HCT116 (cell line): ENCODE measurements at regions of chr5 and their contacts with region 1.

Region 1: GRCh38 chr5:147576646-147577535 is 67.0 kb upstream of the DPYSL3 start:
- DNase-seq: no peak
- ATAC-seq: peak; percentile 90
- H3K4me3 ChIP-seq: no peak overlapping the region
- H3K27ac ChIP-seq: no peak overlapping the region
- H3K4me1 ChIP-seq: no peaks in the 10 kb centered on the region
- H3K27me3 ChIP-seq: no peaks in the 10 kb centered on the region
- CTCF ChIP-seq: peak; percentile 69 to 91 (median 90)
- POLR2A ChIP-seq: no peak
- RAD21 ChIP-seq: peak; percentile 65

Region 2: GRCh38 chr5:146533260-146533857 is 1043.5 kb before region 1 on chr5:
- CTCF ChIA-PET with region 1: interaction called, 3 read pairs
- POLR2A ChIA-PET with region 1: no interaction called
- RAD21 ChIA-PET with region 1: no interaction called
- intact Hi-C with region 1: loop called (anchors 5 kb)
- DNase-seq: peak; percentile 73
- ATAC-seq: peak; percentile 97
- H3K4me3 ChIP-seq: no peak overlapping the region
- H3K27ac ChIP-seq: no peak overlapping the region
- H3K4me1 ChIP-seq: peaks cover 0 to 3% of the 10 kb centered on the region in 2 experiments; a peak in 2 of 4 replicates
- H3K27me3 ChIP-seq: no peaks in the 10 kb centered on the region
- CTCF ChIP-seq: peak; percentile 70 to 88 (median 77)
- POLR2A ChIP-seq: no peak
- RAD21 ChIP-seq: peak; percentile 91

Region 3: GRCh38 chr5:146947181-146947941 is 629.5 kb before region 1 on chr5:
- CTCF ChIA-PET with region 1: no interaction called
- POLR2A ChIA-PET with region 1: no interaction called
- RAD21 ChIA-PET with region 1: no interaction called
- intact Hi-C with region 1: no loop called
- DNase-seq: peak; percentile 16
- ATAC-seq: peak; percentile 77
- H3K4me3 ChIP-seq: no peak overlapping the region
- H3K27ac ChIP-seq: no peak overlapping the region
- H3K4me1 ChIP-seq: no peaks in the 10 kb centered on the region
- H3K27me3 ChIP-seq: no peaks in the 10 kb centered on the region
- CTCF ChIP-seq: peak; percentile 27 to 65 (median 45); a peak in 4 of 6 replicates
- POLR2A ChIP-seq: no peak
- RAD21 ChIP-seq: peak; percentile 50

Region 4: GRCh38 chr5:147188200-147189108 is 388.4 kb before region 1 on chr5:
- CTCF ChIA-PET with region 1: interaction called, 11 read pairs
- POLR2A ChIA-PET with region 1: no interaction called
- RAD21 ChIA-PET with region 1: no interaction called
- intact Hi-C with region 1: no loop called
- DNase-seq: peak; percentile 42
- ATAC-seq: peak; percentile 93
- H3K4me3 ChIP-seq: no peak overlapping the region
- H3K27ac ChIP-seq: no peak overlapping the region
- H3K4me1 ChIP-seq: no peaks in the 10 kb centered on the region
- H3K27me3 ChIP-seq: peaks cover 3% of the 10 kb centered on the region; the same call in 1 of the 2 replicates
- CTCF ChIP-seq: peak; percentile 65 to 88 (median 71)
- POLR2A ChIP-seq: no peak
- RAD21 ChIP-seq: peak; percentile 84

Region 5: DNA sequence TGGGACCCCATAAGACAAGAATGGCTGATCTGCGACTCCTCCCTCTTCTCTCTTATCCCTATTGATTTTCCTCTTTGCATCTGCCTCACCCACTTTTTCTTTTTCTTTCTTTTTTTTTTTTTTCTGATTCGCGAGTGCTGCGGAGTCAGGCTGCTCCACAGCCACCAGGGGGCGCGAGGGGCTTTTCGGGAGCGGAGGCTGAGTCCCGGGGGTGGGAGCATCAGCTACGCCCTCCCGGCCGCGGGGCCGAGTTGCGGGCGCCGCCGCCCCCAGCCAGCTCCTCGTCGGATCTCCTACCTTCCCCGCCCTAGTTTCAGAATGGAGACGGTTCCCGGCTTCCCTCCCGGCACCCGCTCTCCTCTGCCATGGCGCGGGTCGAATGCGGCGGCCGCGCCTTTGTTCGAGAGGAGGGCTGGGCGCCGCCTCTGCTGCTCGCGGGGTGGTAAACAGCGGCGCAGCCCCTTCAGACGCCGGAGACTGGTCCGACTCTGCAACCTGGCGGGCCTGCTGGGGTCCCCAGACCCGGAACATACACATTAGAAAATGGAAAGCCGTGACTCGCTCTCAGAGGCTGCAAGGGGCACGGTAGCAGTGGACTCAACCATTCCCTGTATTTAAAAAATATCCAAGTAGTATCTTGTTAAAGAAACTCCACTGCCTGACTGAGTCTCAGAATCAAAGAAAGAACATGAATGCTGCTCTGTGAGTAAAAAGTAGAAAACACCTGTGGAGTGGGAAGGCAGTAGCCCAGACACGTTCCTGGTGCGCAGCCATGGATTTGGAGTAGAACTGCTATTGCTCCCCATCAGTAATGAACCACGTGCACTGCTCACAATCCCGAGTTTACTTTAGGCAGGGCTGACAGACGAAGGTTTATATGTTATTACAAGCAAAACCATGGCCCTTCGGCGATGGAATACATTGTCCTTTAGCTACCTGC is 122.7 kb before region 1 on chr5:
- CTCF ChIA-PET with region 1: interaction called, 45 read pairs
- POLR2A ChIA-PET with region 1: interaction called, 7 read pairs
- RAD21 ChIA-PET with region 1: interaction called in 1 of 2 experiments, 4 read pairs
- intact Hi-C with region 1: loop called (anchors 1 kb)
- DNase-seq: peak; percentile 58
- ATAC-seq: peak; percentile 87
- H3K4me3 ChIP-seq: peak overlapping the region; percentile 49 to 59
- H3K27ac ChIP-seq: no peak overlapping the region
- H3K4me1 ChIP-seq: peaks cover 0 to 7% of the 10 kb centered on the region in 2 experiments; a peak in 2 of 4 replicates
- H3K27me3 ChIP-seq: peaks cover 3% of the 10 kb centered on the region; the same call in 1 of the 2 replicates
- CTCF ChIP-seq: peak; percentile 78 to 92 (median 89)
- POLR2A ChIP-seq: no peak
- RAD21 ChIP-seq: peak; percentile 69

Region 6: DNA sequence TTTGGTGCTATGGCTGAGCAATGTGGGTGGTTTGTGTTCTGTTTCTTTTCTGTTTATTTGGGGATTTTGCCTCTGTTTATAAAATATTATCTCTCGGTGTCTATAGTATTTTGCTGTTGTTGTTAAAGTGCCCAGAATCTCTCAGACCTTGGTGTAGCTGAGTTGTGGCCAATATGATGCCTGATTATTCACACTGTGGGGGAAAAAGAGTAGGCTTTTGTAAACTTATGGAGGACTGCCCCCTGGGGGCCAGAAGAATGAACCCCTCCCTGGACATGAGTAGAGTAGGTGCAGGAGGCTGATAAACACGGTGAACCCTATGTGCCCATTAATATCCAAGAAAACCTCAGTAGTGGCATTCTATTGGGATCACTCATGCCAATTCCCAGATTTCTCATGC is 18.1 kb before region 1 on chr5:
- CTCF ChIA-PET with region 1: interaction called, 12 read pairs
- POLR2A ChIA-PET with region 1: no interaction called
- RAD21 ChIA-PET with region 1: no interaction called
- intact Hi-C with region 1: no loop called
- DNase-seq: no peak
- ATAC-seq: peak; percentile 76
- H3K4me3 ChIP-seq: no peak overlapping the region
- H3K27ac ChIP-seq: no peak overlapping the region
- H3K4me1 ChIP-seq: no peaks in the 10 kb centered on the region
- H3K27me3 ChIP-seq: 0 out of 2 replicates have a peak, but pooled peaks cover 7% of the 10 kb centered on the region
- CTCF ChIP-seq: peak; percentile 35 to 52 (median 46); a peak in 4 of 6 replicates
- POLR2A ChIP-seq: no peak
- RAD21 ChIP-seq: peak; percentile 57